GM23248 (cell line): ENCODE measurements at regions of chr6 and their contacts with region 1.

Region 1: GRCh38 chr6:156564127-156564806 is 212.9 kb upstream of the ARID1B start:
- DNase-seq: peak; percentile 80
- H3K4me3 ChIP-seq: no peak overlapping the region
- H3K27ac ChIP-seq: no peak overlapping the region
- H3K4me1 ChIP-seq: no peaks in the 10 kb centered on the region
- H3K27me3 ChIP-seq: peaks cover 5% of the 10 kb centered on the region; the same call in 1 of the 2 replicates

Region 2: GRCh38 chr6:155327326-155328073 is 1236.8 kb before region 1 on chr6:
- in situ Hi-C with region 1: loop called (anchors 25 kb)
- DNase-seq: peak; percentile 77
- H3K4me3 ChIP-seq: no peak overlapping the region
- H3K27ac ChIP-seq: no peak overlapping the region
- H3K4me1 ChIP-seq: 0 out of 2 replicates have a peak, but pooled peaks cover 6% of the 10 kb centered on the region
- H3K27me3 ChIP-seq: no peaks in the 10 kb centered on the region

Region 3: DNA sequence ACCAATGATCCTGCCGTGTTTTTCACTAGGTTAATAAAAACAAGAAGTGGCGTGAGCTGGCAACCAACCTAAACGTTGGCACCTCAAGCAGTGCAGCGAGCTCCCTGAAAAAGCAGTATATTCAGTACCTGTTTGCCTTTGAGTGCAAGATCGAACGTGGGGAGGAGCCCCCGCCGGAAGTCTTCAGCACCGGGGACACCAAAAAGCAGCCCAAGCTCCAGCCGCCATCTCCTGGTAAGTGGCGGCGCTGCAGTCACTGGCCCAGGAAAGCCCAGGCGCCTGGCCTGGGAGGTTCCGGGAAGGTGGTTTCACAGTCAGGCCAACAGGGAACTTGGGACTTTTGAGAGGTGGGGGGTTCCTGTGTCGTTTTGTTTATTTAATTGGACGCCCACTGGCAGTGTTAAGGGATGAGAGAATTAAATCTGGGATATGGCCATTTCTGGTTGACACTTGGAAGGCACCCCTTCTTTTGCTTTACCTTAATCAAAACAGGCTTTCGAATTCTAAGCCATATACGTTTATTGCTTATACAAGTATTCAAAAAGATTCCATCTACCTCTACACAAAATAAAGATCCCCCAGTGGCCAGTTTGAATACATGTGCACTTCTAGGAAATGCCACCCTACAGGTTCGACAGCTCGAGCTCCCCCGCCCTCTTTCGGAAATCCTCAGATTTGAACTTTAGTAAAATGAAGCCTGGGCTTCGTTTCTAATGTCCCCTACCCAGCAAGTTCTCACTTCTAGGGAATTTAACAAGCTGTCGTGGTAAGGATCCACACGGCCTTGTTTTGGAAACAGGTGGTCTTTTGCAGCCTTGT is 620.1 kb after region 1 on chr6:
- in situ Hi-C with region 1: loop called (anchors 25 kb)
- DNase-seq: peak; percentile 82
- H3K4me3 ChIP-seq: no peak overlapping the region
- H3K27ac ChIP-seq: no peak overlapping the region
- H3K4me1 ChIP-seq: no peaks in the 10 kb centered on the region
- H3K27me3 ChIP-seq: no peaks in the 10 kb centered on the region